Activated CD4-positive, alpha-beta T cell treated with anti-CD3 and anti-CD28 coated beads for 36 hours (primary cell): ENCODE measurements at regions of chr11 and their contacts with region 1.

Region 1: GRCh38 chr11:7098235-7098832 is 9.5 kb downstream of the RBMXL2 start:
- DNase-seq: no peak
- ATAC-seq: peak; percentile 70
- H3K4me3 Mint-ChIP-seq: no peak overlapping the region
- H3K27ac Mint-ChIP-seq: no peak overlapping the region
- H3K4me1 Mint-ChIP-seq: no peaks in the 10 kb centered on the region
- H3K27me3 Mint-ChIP-seq: peaks cover 10% of the 10 kb centered on the region

Region 2: DNA sequence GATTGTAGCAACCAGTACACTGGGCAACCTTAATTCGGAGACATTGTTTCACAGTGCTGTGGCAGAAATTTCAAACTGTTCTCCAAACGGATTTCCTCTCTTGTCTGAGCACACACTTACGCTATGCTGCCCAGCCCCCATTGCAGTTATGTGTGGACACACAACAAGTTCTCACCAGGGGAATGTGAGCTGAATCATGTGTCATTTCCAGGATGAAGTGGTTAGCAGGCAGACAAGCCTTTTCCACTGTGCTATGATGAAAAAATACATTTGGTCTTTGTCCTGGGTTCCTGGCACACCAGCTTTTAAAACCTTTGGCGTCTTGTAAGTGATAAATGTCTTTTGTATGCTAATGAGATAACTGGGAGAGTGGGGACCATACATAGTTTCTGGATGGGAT is 106.4 kb after region 1 on chr11:
- CTCF ChIA-PET with region 1: no interaction called
- POLR2A ChIA-PET with region 1: no interaction called
- intact Hi-C with region 1: no loop called
- DNase-seq: no peak
- ATAC-seq: no peak
- H3K4me3 Mint-ChIP-seq: no peak overlapping the region
- H3K27ac Mint-ChIP-seq: no peak overlapping the region
- H3K4me1 Mint-ChIP-seq: no peaks in the 10 kb centered on the region
- H3K27me3 Mint-ChIP-seq: peaks cover 12% of the 10 kb centered on the region

Region 3: DNA sequence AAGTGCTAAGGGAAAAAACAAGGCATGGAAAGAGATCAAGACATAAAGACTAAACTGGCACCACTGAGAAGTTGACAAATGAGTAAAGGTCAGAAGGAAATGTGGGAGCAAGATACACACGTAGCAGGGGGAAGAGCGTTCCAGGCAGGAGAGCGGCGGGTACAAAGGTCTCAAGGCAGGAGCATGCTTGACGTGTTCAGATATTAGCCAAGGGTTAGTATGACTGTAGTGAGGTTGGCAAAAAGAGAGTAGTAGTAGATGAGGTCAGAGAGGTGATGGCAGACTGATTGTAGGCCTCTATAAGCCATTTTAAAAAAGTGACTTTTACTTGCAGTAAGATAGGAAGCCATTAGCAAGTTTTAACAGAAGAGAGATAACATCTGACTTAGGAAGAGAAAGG is 163.2 kb after region 1 on chr11:
- CTCF ChIA-PET with region 1: no interaction called
- POLR2A ChIA-PET with region 1: no interaction called
- intact Hi-C with region 1: no loop called
- DNase-seq: no peak
- ATAC-seq: no peak
- H3K4me3 Mint-ChIP-seq: no peak overlapping the region
- H3K27ac Mint-ChIP-seq: no peak overlapping the region
- H3K4me1 Mint-ChIP-seq: no peaks in the 10 kb centered on the region
- H3K27me3 Mint-ChIP-seq: peaks cover 10% of the 10 kb centered on the region

Region 4: GRCh38 chr11:7278314-7278917 is 180.1 kb after region 1 on chr11:
- CTCF ChIA-PET with region 1: interaction called, 12 read pairs
- POLR2A ChIA-PET with region 1: no interaction called
- intact Hi-C with region 1: loop called in 1 of 2 experiments (anchors 5 kb)
- DNase-seq: peak; percentile 12
- ATAC-seq: no peak
- H3K4me3 Mint-ChIP-seq: no peak overlapping the region
- H3K27ac Mint-ChIP-seq: no peak overlapping the region
- H3K4me1 Mint-ChIP-seq: no peaks in the 10 kb centered on the region
- H3K27me3 Mint-ChIP-seq: peaks cover 16% of the 10 kb centered on the region

Region 5: GRCh38 chr11:7665473-7666291 is 567.3 kb after region 1 on chr11:
- CTCF ChIA-PET with region 1: interaction called, 9 read pairs
- POLR2A ChIA-PET with region 1: no interaction called
- intact Hi-C with region 1: loop called in 1 of 2 experiments (anchors 2 kb)
- DNase-seq: peak; percentile 90
- ATAC-seq: peak; percentile 98
- H3K4me3 Mint-ChIP-seq: no peak overlapping the region
- H3K27ac Mint-ChIP-seq: no peak overlapping the region
- H3K4me1 Mint-ChIP-seq: peaks cover 6% of the 10 kb centered on the region
- H3K27me3 Mint-ChIP-seq: no peaks in the 10 kb centered on the region

Region 6: GRCh38 chr11:7696424-7696823 is 598.1 kb after region 1 on chr11:
- CTCF ChIA-PET with region 1: interaction called, 6 read pairs
- POLR2A ChIA-PET with region 1: no interaction called
- intact Hi-C with region 1: loop called in 1 of 2 experiments (anchors 1 kb)
- DNase-seq: peak; percentile 20
- ATAC-seq: peak; percentile 75
- H3K4me3 Mint-ChIP-seq: no peak overlapping the region
- H3K27ac Mint-ChIP-seq: no peak overlapping the region
- H3K4me1 Mint-ChIP-seq: peaks cover 4% of the 10 kb centered on the region
- H3K27me3 Mint-ChIP-seq: peaks cover 24% of the 10 kb centered on the region

Region 7: GRCh38 chr11:7775689-7776088 is 677.4 kb after region 1 on chr11:
- CTCF ChIA-PET with region 1: no interaction called
- POLR2A ChIA-PET with region 1: no interaction called
- intact Hi-C with region 1: no loop called
- DNase-seq: no peak
- ATAC-seq: no peak
- H3K4me3 Mint-ChIP-seq: no peak overlapping the region
- H3K27ac Mint-ChIP-seq: no peak overlapping the region
- H3K4me1 Mint-ChIP-seq: no peaks in the 10 kb centered on the region
- H3K27me3 Mint-ChIP-seq: peaks cover 1% of the 10 kb centered on the region

Region 8: GRCh38 chr11:7986768-7987559 is 888.6 kb after region 1 on chr11 and contains the start of gene EIF3F:
- CTCF ChIA-PET with region 1: no interaction called
- POLR2A ChIA-PET with region 1: no interaction called
- intact Hi-C with region 1: loop called in 1 of 2 experiments (anchors 2 kb)
- DNase-seq: peak; percentile 93
- ATAC-seq: peak; percentile 99
- H3K4me3 Mint-ChIP-seq: peak within 1 kb of the TSS; percentile 94
- H3K27ac Mint-ChIP-seq: peak within 1 kb of the TSS; percentile 99
- H3K4me1 Mint-ChIP-seq: peaks cover 37% of the 10 kb centered on the region
- H3K27me3 Mint-ChIP-seq: no peaks in the 10 kb centered on the region
- total RNA-seq, gene EIF3F: 270 to 289 TPM